Endothelial cell of umbilical vein (primary cell): ENCODE measurements at regions of chr16 and their contacts with region 1.

Region 1: DNA sequence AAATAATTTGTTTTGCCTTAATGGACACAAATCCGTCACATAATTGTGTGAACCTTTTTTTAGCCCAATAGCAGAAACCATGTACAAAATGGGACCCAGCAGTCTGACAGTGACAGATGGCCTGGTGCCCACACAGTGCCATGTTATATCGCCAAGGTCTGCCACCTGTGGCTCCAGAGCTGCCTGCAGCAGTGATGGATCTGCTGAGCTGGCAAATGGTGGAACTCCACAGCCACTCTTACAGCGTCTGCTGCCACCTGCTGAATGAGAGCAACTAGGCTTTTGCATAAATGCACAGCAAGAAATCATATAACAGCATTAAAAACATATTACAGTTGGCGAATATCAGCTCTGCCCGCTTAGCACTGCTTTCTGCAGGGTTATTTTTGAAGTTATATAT is 59.4 kb downstream of the NUP93 start:
- DNase-seq: peak; percentile 55
- H3K4me3 ChIP-seq: no peak overlapping the region
- H3K27ac ChIP-seq: no peak overlapping the region
- H3K4me1 ChIP-seq: peaks cover 4% of the 10 kb centered on the region
- H3K27me3 ChIP-seq: no peaks in the 10 kb centered on the region
- CTCF ChIP-seq: peak; percentile 6 to 53
- POLR2A ChIP-seq: no peak

Region 2: DNA sequence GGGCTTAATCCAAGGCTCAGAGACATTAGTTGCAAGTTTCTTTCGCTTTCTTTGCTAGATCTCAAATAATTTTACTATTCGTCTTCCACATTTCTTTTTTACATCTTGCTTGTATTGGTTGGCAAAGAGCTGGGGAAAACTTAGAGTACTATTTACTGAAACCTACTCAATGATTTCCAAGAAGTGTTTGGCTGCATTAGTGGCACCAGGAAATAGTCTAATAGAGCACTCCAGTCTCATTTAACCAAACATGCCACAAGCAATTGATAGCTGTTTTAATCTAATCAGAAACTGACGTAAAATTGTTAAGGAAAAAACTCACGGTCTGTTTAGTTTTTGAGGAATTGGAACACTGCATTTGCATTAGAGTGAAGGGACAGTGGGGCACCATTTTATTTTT is 30.4 kb before region 1 on chr16:
- CTCF ChIA-PET with region 1: no interaction called
- POLR2A ChIA-PET with region 1: no interaction called
- dilution Hi-C with region 1: no loop called
- intact Hi-C with region 1: no loop called
- DNase-seq: no peak
- H3K4me3 ChIP-seq: no peak overlapping the region
- H3K27ac ChIP-seq: no peak overlapping the region
- H3K4me1 ChIP-seq: no peaks in the 10 kb centered on the region
- H3K27me3 ChIP-seq: no peaks in the 10 kb centered on the region
- CTCF ChIP-seq: no peak
- POLR2A ChIP-seq: no peak

Region 3: DNA sequence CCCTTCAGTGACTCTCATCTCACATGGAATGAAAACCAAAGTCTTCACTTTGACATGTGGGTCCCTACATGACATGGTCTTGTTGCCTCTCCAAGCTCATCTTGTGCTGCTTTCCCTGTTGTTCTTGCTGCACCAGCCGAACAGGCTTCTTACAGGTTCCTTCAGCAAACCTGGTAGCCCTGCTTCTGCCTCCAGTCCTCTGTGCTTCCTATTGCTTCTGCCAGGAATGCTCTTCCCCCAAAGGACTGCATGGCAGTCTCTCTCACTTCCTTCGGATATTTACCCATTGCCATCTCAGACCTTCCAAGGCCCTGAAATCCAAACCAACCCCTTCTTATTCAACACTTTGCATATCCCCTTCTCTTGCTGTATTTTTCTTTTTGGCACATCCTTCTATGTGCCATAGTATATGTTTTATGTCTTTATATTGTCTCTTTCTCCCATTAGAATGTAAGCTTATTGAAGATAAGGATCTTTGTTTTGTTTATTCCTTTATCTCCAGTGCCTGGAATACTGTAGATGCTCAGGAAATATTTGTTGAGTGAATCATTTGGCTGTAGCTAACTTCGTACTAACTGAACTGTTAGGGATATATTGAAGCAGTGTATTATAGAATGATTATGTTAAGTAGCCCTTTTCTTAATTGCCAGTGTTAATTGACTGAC is 17.8 kb after region 1 on chr16:
- CTCF ChIA-PET with region 1: interaction called, 27 read pairs
- POLR2A ChIA-PET with region 1: no interaction called
- dilution Hi-C with region 1: no loop called
- intact Hi-C with region 1: no loop called
- DNase-seq: peak; percentile 81
- H3K4me3 ChIP-seq: peak overlapping the region in 1 of 3 experiments; percentile 8
- H3K27ac ChIP-seq: peak overlapping the region; percentile 58
- H3K4me1 ChIP-seq: peaks cover 22% of the 10 kb centered on the region
- H3K27me3 ChIP-seq: no peaks in the 10 kb centered on the region
- CTCF ChIP-seq: no peak
- POLR2A ChIP-seq: no peak

Region 4: GRCh38 chr16:56830669-56831068 is 41.3 kb after region 1 on chr16:
- CTCF ChIA-PET with region 1: interaction called, 20 read pairs
- POLR2A ChIA-PET with region 1: no interaction called
- dilution Hi-C with region 1: no loop called
- intact Hi-C with region 1: no loop called
- DNase-seq: no peak
- H3K4me3 ChIP-seq: no peak overlapping the region
- H3K27ac ChIP-seq: no peak overlapping the region
- H3K4me1 ChIP-seq: no peaks in the 10 kb centered on the region
- H3K27me3 ChIP-seq: no peaks in the 10 kb centered on the region
- CTCF ChIP-seq: no peak
- POLR2A ChIP-seq: no peak

Region 5: DNA sequence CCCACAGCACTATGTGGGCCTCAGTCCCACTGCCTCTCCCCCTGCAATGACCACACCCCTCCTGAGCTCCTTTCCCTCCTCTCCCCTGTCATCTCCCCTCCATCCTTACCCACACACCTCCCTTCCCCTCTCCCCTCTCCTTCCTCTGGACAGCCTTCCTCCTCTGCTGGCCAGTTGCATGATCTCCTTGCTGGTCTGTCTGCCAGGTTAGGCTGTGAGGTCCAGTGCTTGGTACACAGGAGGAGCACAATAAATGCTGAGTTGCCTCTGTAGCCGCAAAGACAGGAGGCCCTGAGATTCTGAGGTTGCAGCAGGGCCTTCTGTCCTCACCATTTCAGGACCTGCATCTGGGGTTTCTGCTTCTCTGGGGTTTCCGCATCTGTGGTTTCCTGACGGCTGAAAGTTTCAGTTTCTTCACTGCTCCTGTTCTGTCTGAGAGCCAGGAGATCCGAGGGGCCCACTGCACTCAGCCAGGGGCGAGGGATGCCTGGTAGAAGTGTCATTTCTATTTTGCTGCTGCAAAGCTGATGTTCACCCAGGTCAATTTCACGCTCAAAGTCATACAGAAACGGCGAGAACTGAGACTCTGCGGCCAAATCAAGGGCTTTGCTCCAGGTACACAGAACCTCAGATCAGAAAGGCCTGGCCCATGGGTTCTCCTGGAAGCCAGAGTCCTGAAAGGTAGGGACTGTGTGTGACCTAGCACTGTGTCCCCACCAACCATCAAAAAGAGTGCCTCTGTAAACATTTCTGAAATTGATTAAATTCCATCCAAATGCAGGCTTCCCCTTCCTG is 71.1 kb after region 1 on chr16:
- CTCF ChIA-PET with region 1: interaction called, 231 read pairs
- POLR2A ChIA-PET with region 1: no interaction called
- dilution Hi-C with region 1: no loop called
- intact Hi-C with region 1: no loop called
- DNase-seq: no peak
- H3K4me3 ChIP-seq: no peak overlapping the region
- H3K27ac ChIP-seq: no peak overlapping the region
- H3K4me1 ChIP-seq: no peaks in the 10 kb centered on the region
- H3K27me3 ChIP-seq: no peaks in the 10 kb centered on the region
- CTCF ChIP-seq: no peak
- POLR2A ChIP-seq: no peak

Region 6: GRCh38 chr16:56950881-56951771 is 161.8 kb after region 1 on chr16:
- CTCF ChIA-PET with region 1: interaction called, 54 read pairs
- POLR2A ChIA-PET with region 1: no interaction called
- dilution Hi-C with region 1: no loop called
- intact Hi-C with region 1: loop called (anchors 1 kb)
- DNase-seq: peak; percentile 59
- H3K4me3 ChIP-seq: no peak overlapping the region
- H3K27ac ChIP-seq: no peak overlapping the region
- H3K4me1 ChIP-seq: no peaks in the 10 kb centered on the region
- H3K27me3 ChIP-seq: no peaks in the 10 kb centered on the region
- CTCF ChIP-seq: peak; percentile 63 to 76
- POLR2A ChIP-seq: no peak